SK-N-SH (cell line): ENCODE measurements at regions of chr16 and their contacts with region 1.

Region 1: GRCh38 chr16:47018223-47018891 is 44.9 kb upstream of the DNAJA2 start:
- DNase-seq: peak; percentile 76
- H3K4me3 ChIP-seq: no peak overlapping the region
- H3K27ac ChIP-seq: no peak overlapping the region
- H3K4me1 ChIP-seq: no peaks in the 10 kb centered on the region
- H3K27me3 ChIP-seq: no peaks in the 10 kb centered on the region
- CTCF ChIP-seq: peak; percentile 43
- EP300 ChIP-seq: no peak
- RAD21 ChIP-seq: peak; percentile 73

Region 2: DNA sequence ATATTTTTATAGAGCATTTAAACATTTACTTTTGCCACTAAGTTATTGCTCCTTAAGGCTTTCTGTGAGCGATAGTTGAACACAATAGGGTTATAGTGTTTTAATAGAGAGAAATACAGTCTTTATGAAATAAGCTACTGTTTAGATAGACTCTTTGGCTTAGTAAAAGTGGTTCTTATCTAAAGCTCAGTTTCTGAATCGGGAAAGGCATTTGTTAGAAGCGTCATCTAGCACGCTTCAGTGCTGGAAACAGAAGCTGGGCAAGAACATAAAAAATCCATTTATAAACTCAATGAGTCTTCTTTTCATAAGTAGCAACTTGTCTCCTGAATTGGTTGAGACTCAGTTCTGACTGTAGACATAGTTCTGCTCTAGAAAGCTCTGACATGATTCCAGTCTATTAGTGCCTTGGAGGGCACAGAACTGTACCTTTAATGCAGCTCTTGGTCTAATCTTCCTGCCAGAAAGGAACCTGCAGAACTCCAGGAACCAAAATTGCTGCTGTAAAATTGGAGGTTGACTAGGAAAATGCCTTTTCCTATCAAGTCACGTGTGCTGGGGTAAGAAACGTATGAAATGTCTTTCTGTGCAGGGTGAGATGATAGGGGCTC is 10.5 kb after region 1 on chr16:
- CTCF ChIA-PET with region 1: interaction called, 12 read pairs
- POLR2A ChIA-PET with region 1: no interaction called
- DNase-seq: no peak
- H3K4me3 ChIP-seq: no peak overlapping the region
- H3K27ac ChIP-seq: no peak overlapping the region
- H3K4me1 ChIP-seq: no peaks in the 10 kb centered on the region
- H3K27me3 ChIP-seq: no peaks in the 10 kb centered on the region
- CTCF ChIP-seq: no peak
- EP300 ChIP-seq: no peak
- RAD21 ChIP-seq: no peak

Region 3: DNA sequence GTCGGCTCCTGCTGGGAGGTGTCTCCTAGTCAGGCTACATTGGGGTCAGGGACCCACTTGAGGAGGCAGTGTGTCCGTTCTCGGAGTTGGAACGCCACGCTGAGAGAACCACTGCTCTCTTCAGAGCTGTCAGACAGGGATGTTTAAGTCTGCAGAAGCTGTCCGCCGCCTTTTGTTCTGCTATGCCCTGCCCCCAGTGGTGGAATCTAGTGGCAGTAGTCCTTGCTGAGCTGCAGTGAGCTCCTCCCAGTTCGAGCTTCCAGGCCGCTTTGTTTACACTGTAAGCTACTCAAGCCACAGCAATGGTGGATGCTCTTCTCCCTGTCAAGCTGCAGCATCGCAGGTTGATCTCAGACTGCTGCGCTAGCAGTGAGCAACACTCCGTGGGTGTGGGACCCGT is 406.5 kb after region 1 on chr16:
- CTCF ChIA-PET with region 1: no interaction called
- POLR2A ChIA-PET with region 1: no interaction called
- DNase-seq: no peak
- H3K4me3 ChIP-seq: no peak overlapping the region
- H3K27ac ChIP-seq: no peak overlapping the region
- H3K4me1 ChIP-seq: no peaks in the 10 kb centered on the region
- H3K27me3 ChIP-seq: no peaks in the 10 kb centered on the region
- CTCF ChIP-seq: no peak
- EP300 ChIP-seq: no peak
- RAD21 ChIP-seq: no peak